ENCODE measurements at regions of chr19 and their contacts with region 1.

Region 1: GRCh38 chr19:43595999-43596841 is at the starts of genes IRGQ and ZNF576:
- DNase-seq: peak; percentile 99 to 100 (median 100)
- H3K4me3 ChIP-seq: peak within 1 kb of the TSS; percentile 24 to 65 (median 54)
- H3K27ac ChIP-seq: peak within 1 kb of the TSS; percentile 92 to 97 (median 95)
- H3K4me1 ChIP-seq: peaks cover 20 to 30% of the 10 kb centered on the region in 2 donors
- H3K27me3 ChIP-seq: no peaks in the 10 kb centered on the region
- CTCF ChIP-seq: peak in 2 of 6 experiments; percentile 9 to 18
- POLR2A ChIP-seq: peak; percentile 93 to 96
- total RNA-seq, gene IRGQ: 14.0 to 57.9 (median 23.8) TPM
- total RNA-seq, gene ZNF576: 15.2 to 114 (median 25.5) TPM

Region 2: GRCh38 chr19:43534816-43535761 is 61.1 kb before region 1 on chr19:
- intact Hi-C with region 1: loop called in 1 of 2 experiments (anchors 5 kb)
- DNase-seq: peak; percentile 74 to 86 (median 81)
- H3K4me3 ChIP-seq: no peak overlapping the region
- H3K27ac ChIP-seq: peak overlapping the region in 3 of 5 donors; percentile 5 to 95 (median 94)
- H3K4me1 ChIP-seq: peaks cover 6 to 9% of the 10 kb centered on the region in 2 donors
- H3K27me3 ChIP-seq: no peaks in the 10 kb centered on the region
- CTCF ChIP-seq: peak; percentile 52 to 73 (median 61)
- POLR2A ChIP-seq: no peak

Region 3: DNA sequence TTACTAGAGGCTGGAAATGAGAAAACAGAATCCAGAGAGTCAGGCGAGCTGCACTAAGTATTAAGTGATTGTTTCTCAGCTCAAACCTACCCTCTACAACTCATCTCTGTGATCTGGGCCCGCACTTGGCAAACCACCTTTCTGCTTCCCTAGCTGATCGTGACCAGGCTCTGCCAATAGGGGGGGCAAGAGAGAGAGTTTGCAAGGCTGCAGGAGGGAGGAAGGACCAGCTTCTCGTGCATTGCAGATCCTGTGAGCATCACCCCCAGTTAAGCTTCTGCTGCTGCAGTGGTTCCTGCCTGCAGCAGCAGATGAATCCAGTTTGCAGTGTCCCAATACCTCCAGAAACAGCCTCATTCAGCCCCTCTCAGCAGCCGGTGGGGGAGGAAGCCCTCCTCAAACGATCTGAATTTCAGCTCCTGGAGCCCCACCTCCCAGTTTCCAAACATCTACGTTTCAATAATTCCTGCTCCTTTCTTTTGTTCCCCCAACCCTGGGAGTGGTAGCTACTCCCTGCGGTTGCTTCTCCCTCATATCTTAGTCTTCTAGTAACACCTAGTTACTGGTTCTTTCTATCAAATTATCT is 40.9 kb before region 1 on chr19:
- intact Hi-C with region 1: loop called in 1 of 2 experiments (anchors 5 kb)
- DNase-seq: peak; percentile 81 to 90 (median 82)
- H3K4me3 ChIP-seq: no peak overlapping the region
- H3K27ac ChIP-seq: no peak overlapping the region
- H3K4me1 ChIP-seq: peaks cover 7 to 10% of the 10 kb centered on the region in 2 donors
- H3K27me3 ChIP-seq: no peaks in the 10 kb centered on the region
- CTCF ChIP-seq: peak; percentile 49 to 72 (median 60)
- POLR2A ChIP-seq: no peak